Body of pancreas (tissue), 4 donors: ENCODE measurements at regions of chr1 and their contacts with region 1.

Region 1: GRCh38 chr1:22437573-22437972 is 14.1 kb upstream of the ZBTB40 start:
- DNase-seq: no peak
- ATAC-seq: no peak
- H3K4me3 ChIP-seq: no peak overlapping the region
- H3K27ac ChIP-seq: no peak overlapping the region
- H3K4me1 ChIP-seq: peaks cover 7% of the 10 kb centered on the region
- H3K27me3 ChIP-seq: no peaks in the 10 kb centered on the region
- CTCF ChIP-seq: no peak
- POLR2A ChIP-seq: no peak

Region 2: DNA sequence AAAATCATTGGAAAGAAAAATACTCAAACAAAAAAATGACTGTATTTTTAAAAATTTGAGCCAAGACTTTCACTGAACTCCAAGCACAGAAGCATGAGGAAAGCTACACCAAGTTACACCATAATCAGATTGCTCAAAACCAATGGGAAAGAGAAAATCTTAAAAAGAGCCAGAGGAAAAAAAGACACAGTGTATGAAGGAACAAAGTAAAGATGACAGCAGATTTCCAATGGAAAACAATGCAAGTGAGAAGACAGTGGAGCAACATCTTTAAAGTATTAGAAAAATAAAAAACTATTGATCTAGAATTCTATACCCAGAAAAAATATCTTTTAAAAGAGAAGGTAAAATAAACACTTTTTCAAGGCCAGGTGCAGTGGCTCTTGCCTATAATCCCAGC is 133.8 kb before region 1 on chr1:
- intact Hi-C with region 1: no loop called
- DNase-seq: no peak
- ATAC-seq: no peak
- H3K4me3 ChIP-seq: no peak overlapping the region
- H3K27ac ChIP-seq: no peak overlapping the region
- H3K4me1 ChIP-seq: no peaks in the 10 kb centered on the region
- H3K27me3 ChIP-seq: no peaks in the 10 kb centered on the region
- CTCF ChIP-seq: no peak
- POLR2A ChIP-seq: no peak

Region 3: GRCh38 chr1:22527555-22528296 is 90.2 kb after region 1 on chr1:
- intact Hi-C with region 1: loop called (anchors 10 kb)
- DNase-seq: peak in 3 of 4 donors; percentile 39 to 57 (median 51)
- ATAC-seq: no peak
- H3K4me3 ChIP-seq: no peak overlapping the region
- H3K27ac ChIP-seq: peak overlapping the region in 3 of 4 donors; percentile 68 to 83 (median 78)
- H3K4me1 ChIP-seq: peaks cover 70% of the 10 kb centered on the region
- H3K27me3 ChIP-seq: no peaks in the 10 kb centered on the region
- CTCF ChIP-seq: peak in 5 of 7 experiments; percentile 9 to 62 (median 46)
- POLR2A ChIP-seq: no peak